ENCODE measurements at regions of chr3 and their contacts with region 1.

Region 1: GRCh38 chr3:31377045-31377642 is 155.6 kb upstream of the STT3B start:
- DNase-seq: peak; percentile 66
- H3K4me3 Mint-ChIP-seq: no peak overlapping the region
- H3K27ac Mint-ChIP-seq: no peak overlapping the region
- H3K4me1 Mint-ChIP-seq: peaks cover 13% of the 10 kb centered on the region
- H3K27me3 Mint-ChIP-seq: no peaks in the 10 kb centered on the region

Region 2: DNA sequence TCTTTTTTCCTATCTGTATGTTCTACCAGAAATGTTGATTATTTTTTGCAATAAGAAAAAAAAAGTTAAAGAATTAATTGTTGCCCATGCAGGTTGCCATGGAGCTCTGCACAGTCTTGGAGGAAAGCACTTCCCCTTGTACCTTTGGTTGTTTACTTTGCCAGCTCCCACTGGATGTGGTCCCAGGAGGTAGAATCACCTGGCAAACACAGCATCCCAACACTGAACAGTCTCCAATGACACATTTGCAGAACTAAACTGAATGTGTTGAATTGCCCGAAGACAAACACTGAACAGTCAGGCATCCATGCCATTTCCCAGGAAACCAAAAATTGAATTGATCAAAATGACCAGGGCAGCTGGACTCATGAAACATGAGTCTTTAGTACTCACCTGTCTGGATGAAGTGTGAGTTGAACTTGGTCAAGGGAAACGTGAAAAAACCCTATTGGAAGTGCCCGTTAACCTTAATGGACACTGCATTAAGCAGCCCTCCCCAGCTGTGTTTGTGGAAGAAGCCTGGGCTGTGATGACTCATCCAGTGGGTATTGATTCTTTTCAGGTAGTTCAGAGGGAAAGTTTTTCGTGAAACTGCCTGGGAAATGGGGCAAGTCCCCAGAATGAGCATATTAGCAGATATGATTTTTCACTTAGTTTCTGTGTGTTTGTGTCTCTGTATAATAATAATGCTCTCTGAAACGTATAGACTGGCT is 129.1 kb before region 1 on chr3:
- intact Hi-C with region 1: loop called (anchors 5 kb)
- DNase-seq: no peak
- H3K4me3 Mint-ChIP-seq: no peak overlapping the region
- H3K27ac Mint-ChIP-seq: peak overlapping the region; percentile 31
- H3K4me1 Mint-ChIP-seq: peaks cover 48% of the 10 kb centered on the region
- H3K27me3 Mint-ChIP-seq: no peaks in the 10 kb centered on the region

Region 3: DNA sequence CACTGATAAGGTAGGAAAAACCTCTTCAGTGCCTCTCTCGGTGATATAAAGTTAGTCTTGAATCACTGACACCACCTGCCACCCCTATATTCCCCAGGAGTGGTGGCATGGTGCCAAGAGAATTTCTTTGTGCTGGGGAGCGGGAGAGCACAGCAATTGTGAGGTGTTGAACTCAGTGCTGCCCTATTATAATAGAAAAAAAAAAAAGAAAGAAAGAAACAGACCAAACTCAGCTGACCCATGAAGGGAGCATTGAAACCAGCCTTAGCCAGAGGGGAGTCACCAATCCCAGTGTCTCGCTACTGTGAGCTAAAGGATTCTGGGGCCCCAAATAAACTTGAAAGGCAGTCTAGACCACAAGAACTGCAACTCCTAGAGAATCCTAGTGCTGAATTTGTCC is 45.8 kb before region 1 on chr3:
- intact Hi-C with region 1: no loop called
- DNase-seq: no peak
- H3K4me3 Mint-ChIP-seq: no peak overlapping the region
- H3K27ac Mint-ChIP-seq: no peak overlapping the region
- H3K4me1 Mint-ChIP-seq: no peaks in the 10 kb centered on the region
- H3K27me3 Mint-ChIP-seq: no peaks in the 10 kb centered on the region